ENCODE measurements at regions of chr17 and their contacts with region 1.

Region 1: DNA sequence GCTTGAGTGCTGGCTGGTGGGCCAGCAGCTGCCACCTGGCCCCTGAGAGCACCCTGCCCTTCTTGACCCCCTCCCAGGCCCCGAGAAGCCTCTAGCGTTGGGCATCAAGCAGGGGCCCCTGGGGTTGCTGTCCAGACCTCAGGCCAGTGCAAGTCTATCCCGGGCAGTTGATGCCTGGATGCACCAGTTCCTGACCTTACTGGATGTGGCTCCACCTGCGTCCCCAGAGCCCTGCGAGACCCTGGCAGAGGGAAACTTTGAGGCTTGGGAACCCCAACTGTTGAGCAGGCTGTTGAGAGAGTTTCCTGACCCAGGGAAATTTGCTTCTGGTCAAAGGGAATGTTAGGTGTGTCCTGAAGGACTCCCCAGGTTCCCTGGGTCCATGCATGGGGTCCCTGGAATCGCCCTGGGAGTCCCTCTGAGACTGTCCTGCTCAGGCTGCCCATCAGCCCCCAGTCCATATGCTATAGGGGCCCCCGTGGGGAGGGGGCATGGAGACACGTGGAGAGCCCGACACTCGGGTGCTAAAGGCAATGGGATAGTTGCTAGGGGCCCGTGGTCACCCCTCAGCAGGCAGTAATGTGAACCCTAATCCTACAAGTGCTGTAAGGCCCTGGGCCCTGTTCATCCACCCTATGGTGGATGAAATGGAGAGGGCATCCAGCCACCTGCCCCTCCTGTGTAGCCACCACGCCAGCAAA is 46.4 kb downstream of the RAB11FIP4 start:
- DNase-seq: peak in 1 of 3 donors; percentile 29
- ATAC-seq: peak; percentile 5
- H3K4me3 ChIP-seq: no peak overlapping the region
- H3K4me1 ChIP-seq: no peaks in the 10 kb centered on the region
- CTCF ChIP-seq: no peak

Region 2: DNA sequence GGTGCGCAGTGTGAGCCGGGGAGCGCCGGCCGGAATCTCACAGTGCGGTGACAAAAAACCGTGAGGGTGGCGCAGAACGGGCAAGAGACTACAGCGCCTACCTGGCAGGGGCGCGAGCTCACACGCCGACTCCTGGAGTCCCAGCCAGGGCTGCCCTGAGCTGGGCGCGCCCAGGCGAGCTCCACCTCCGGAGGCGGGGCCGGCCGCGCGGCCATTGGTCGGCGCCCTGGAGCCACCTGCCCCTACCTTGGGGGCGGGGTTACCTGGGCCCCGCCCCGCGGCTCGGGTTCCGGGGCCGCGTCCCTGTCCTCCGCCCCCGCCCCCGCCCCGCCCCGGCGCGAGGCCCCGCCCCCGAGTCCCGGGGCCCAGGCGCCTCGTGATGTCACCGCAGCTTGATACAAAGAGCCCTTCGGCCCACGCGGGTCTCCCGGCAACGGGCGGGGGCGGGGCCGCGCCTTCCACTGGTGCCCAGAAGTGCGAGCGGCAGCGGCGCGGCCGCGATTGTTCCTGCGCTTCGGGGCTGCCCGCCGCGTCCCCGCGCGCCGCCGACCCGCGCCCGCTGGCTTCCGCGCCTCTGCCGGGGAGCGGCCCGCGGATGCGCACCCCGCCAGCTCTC is 49.9 kb after region 1 on chr17:
- intact Hi-C with region 1: no loop called
- DNase-seq: peak; percentile 96 to 97 (median 97)
- ATAC-seq: peak; percentile 88
- H3K4me3 ChIP-seq: peak overlapping the region; percentile 42
- H3K4me1 ChIP-seq: peaks cover 30% of the 10 kb centered on the region
- CTCF ChIP-seq: no peak

Region 3: GRCh38 chr17:31524926-31525800 is 87.3 kb after region 1 on chr17:
- intact Hi-C with region 1: loop called (anchors 5 kb)
- DNase-seq: peak; percentile 87 to 97 (median 91)
- ATAC-seq: peak; percentile 93
- H3K4me3 ChIP-seq: no peak overlapping the region
- H3K4me1 ChIP-seq: no peaks in the 10 kb centered on the region
- CTCF ChIP-seq: peak; percentile 59